Caco-2 (cell line): ENCODE measurements at regions of chr17 and their contacts with region 1.

Region 1: DNA sequence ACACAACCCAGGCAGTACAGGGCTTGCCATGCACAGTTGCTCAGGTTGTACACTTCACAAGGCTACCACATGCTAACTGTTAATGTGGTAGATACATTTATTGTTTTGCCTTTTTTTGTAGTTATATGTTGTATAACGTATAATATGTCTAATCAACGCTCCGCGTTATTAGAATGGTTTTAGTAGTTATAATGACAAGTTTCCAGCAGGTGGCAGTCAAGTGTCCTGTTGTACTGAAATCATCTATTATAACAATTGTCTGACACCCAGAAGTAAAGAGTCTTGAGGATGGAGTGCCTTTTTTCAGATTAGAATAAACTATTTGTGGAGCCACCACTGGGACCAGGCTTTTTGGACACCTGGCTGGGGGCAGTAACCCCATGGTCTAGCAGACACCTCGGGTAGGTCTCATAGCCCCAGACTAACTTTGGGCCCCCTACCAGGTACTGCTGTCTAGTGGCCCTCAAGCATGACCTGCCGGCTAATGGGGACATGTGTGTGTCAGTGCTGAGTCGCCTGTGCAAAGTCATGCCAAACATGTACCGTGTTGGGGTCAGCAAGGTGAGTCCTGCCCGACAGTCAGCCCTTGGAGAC is 32.8 kb downstream of the MYO15A start:
- DNase-seq: peak in 1 of 2 experiments; percentile 62
- H3K4me3 ChIP-seq: no peak overlapping the region
- H3K4me3 Mint-ChIP-seq: no peak overlapping the region
- H3K27ac Mint-ChIP-seq: no peak overlapping the region
- H3K4me1 ChIP-seq: peaks cover 5% of the 10 kb centered on the region
- H3K4me1 Mint-ChIP-seq: peaks cover 14% of the 10 kb centered on the region
- H3K27me3 ChIP-seq: no peaks in the 10 kb centered on the region
- H3K27me3 Mint-ChIP-seq: no peaks in the 10 kb centered on the region
- CTCF ChIP-seq: peak; percentile 55 to 73

Region 2: GRCh38 chr17:18070861-18071340 is 70.4 kb before region 1 on chr17:
- CTCF ChIA-PET with region 1: no interaction called
- POLR2A ChIA-PET with region 1: no interaction called
- intact Hi-C with region 1: loop called (anchors 10 kb)
- DNase-seq: no peak
- H3K4me3 ChIP-seq: no peak overlapping the region
- H3K4me3 Mint-ChIP-seq: peak overlapping the region; percentile 57
- H3K27ac Mint-ChIP-seq: no peak overlapping the region
- H3K4me1 ChIP-seq: no peaks in the 10 kb centered on the region; the same call in none of the 2 replicates
- H3K4me1 Mint-ChIP-seq: peaks cover 8% of the 10 kb centered on the region
- H3K27me3 ChIP-seq: no peaks in the 10 kb centered on the region
- H3K27me3 Mint-ChIP-seq: no peaks in the 10 kb centered on the region
- CTCF ChIP-seq: no peak

Region 3: DNA sequence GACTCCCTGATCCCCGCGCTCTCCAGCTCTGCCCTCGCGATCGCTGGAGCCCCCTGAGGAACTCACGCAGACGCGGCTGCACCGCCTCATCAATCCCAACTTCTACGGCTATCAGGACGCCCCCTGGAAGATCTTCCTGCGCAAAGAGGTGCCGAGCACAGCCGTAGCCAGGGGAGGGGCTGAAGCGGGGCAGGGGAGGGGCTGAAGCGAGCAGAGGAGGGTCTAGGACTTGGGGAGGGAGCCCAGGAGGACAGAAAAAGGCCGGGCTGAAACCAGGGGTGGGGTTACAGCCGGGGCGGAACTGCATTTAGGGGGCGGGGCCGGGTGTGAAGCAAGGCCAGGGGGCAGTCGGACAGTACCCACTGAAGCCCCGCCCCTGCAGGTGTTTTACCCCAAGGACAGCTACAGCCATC is 12.4 kb after region 1 on chr17:
- CTCF ChIA-PET with region 1: interaction called, 10 read pairs
- POLR2A ChIA-PET with region 1: no interaction called
- intact Hi-C with region 1: no loop called
- DNase-seq: peak; percentile 94 to 95
- H3K4me3 ChIP-seq: peak overlapping the region; percentile 43
- H3K4me3 Mint-ChIP-seq: peak overlapping the region; percentile 74
- H3K27ac Mint-ChIP-seq: no peak overlapping the region
- H3K4me1 ChIP-seq: peaks cover 3% of the 10 kb centered on the region; the same call in 1 of the 2 replicates
- H3K4me1 Mint-ChIP-seq: no peaks in the 10 kb centered on the region
- H3K27me3 ChIP-seq: no peaks in the 10 kb centered on the region
- H3K27me3 Mint-ChIP-seq: no peaks in the 10 kb centered on the region
- CTCF ChIP-seq: peak in 1 of 2 experiments; percentile 22

Region 4: DNA sequence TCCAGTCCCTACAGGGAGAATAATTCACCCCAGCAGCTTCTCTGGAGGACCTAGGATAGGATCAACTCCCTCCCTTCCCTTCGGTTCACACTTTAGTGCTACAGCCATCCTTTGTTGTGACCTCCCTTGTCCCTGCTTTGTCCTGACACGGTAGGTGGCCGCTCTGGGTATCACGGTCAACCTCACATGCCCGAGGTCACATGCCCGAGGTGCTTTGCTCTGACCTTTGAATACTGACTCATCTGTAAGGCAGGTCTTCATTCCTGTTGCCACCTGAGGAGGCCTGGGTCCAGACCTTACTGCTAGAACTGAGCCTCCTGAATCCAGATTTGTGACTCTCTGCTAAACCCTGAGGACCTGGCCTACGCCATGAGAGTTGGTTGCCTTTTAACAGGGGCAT is 62.0 kb after region 1 on chr17:
- CTCF ChIA-PET with region 1: interaction called, 3 read pairs
- POLR2A ChIA-PET with region 1: no interaction called
- intact Hi-C with region 1: loop called (anchors 5 kb)
- DNase-seq: peak; percentile 78 to 83
- H3K4me3 ChIP-seq: no peak overlapping the region
- H3K4me3 Mint-ChIP-seq: peak overlapping the region; percentile 44
- H3K27ac Mint-ChIP-seq: peak overlapping the region; percentile 88
- H3K4me1 ChIP-seq: peaks cover 19% of the 10 kb centered on the region
- H3K4me1 Mint-ChIP-seq: peaks cover 12% of the 10 kb centered on the region
- H3K27me3 ChIP-seq: no peaks in the 10 kb centered on the region
- H3K27me3 Mint-ChIP-seq: no peaks in the 10 kb centered on the region
- CTCF ChIP-seq: no peak